PC-9 (cell line): ENCODE measurements at regions of chr16 and their contacts with region 1.

Region 1: DNA sequence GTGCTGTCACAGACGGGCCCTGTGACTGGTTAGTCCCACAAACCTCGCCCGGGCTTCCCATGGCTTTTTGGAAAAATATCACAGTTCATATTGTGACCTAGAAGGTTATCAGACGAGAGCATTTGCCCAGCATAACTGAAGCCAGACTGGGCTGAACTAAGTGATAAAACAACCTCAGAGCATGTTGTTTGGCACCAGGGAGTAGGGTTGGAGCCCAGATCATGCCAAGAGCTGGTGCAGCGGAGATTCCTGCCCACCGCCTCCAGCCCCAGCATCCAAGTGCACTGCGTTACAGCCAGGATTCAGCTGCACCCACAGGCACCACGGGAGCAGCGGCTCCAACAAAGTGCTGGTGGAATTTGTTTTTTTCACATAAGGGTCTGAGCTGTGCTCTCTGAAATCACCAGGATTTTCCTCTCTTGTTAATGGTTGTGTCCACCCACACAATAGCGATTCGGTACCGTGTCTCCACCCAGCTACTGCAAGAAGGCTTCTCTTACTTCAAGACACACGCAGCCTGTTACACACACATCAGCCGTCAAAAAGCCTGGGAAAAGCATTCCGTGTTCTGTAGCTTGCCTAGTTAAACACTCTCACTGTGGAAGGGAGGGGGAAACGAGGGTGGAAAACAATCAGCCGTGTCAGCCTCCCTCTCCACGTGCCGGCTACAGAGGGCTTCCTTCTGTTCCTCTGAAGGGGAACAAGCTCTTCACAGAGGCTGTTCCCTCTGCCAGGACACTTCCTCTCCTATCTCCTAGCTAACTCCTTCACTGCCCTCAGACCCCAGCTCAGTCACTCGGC is 273.8 kb downstream of the C16orf95 start:
- DNase-seq: no peak
- H3K4me3 ChIP-seq: no peak overlapping the region
- H3K27ac ChIP-seq: no peak overlapping the region
- H3K4me1 ChIP-seq: no peaks in the 10 kb centered on the region
- H3K27me3 ChIP-seq: peaks cover 89% of the 10 kb centered on the region
- CTCF ChIP-seq: no peak

Region 2: DNA sequence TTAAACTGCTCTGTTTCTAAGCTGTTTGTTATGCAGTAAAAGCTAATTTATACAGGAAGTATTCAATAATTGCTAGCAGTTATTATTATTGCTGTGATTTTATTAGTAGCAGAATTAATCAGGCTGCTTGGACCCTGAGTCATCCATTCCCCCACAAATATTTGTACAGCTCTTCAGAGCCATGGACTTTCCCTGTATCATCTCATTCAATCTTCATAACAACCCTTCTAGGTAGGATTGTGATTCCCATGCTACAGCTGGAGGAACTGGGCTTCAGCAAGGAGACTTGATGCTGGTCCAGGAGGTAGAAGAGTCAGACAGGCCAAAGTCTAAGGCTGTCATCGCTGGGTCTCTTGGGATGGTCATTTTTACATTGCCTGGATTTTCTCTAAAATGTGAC is 65.5 kb after region 1 on chr16:
- CTCF ChIA-PET with region 1: no interaction called
- POLR2A ChIA-PET with region 1: no interaction called
- intact Hi-C with region 1: no loop called
- DNase-seq: no peak
- H3K4me3 ChIP-seq: no peak overlapping the region
- H3K27ac ChIP-seq: no peak overlapping the region
- H3K4me1 ChIP-seq: no peaks in the 10 kb centered on the region
- H3K27me3 ChIP-seq: peaks cover 97% of the 10 kb centered on the region
- CTCF ChIP-seq: no peak

Region 3: GRCh38 chr16:87183656-87184055 is 140.2 kb after region 1 on chr16:
- CTCF ChIA-PET with region 1: no interaction called
- POLR2A ChIA-PET with region 1: interaction called, 11 read pairs
- intact Hi-C with region 1: no loop called
- DNase-seq: no peak
- H3K4me3 ChIP-seq: no peak overlapping the region
- H3K27ac ChIP-seq: no peak overlapping the region
- H3K4me1 ChIP-seq: peaks cover 8% of the 10 kb centered on the region; the same call in 1 of the 2 replicates
- H3K27me3 ChIP-seq: peaks cover 11% of the 10 kb centered on the region
- CTCF ChIP-seq: no peak